ENCODE measurements at regions of chr3 and their contacts with region 1.

Region 1: GRCh38 chr3:194682694-194683310 is 2.9 kb upstream of the FAM43A start:
- DNase-seq: peak; percentile 83
- ATAC-seq: peak; percentile 84
- H3K4me3 ChIP-seq: peak overlapping the region in 1 of 3 experiments; percentile 59; a peak in 3 of 6 replicates
- H3K27ac ChIP-seq: no peak overlapping the region
- H3K4me1 ChIP-seq: peaks cover 50% of the 10 kb centered on the region
- H3K27me3 ChIP-seq: peaks cover 0 to 31% of the 10 kb centered on the region in 2 experiments; a peak in 1 of 5 replicates
- CTCF ChIP-seq: peak; percentile 96
- EP300 ChIP-seq: no peak
- POLR2A ChIP-seq: no peak
- RAD21 ChIP-seq: peak; percentile 93

Region 2: DNA sequence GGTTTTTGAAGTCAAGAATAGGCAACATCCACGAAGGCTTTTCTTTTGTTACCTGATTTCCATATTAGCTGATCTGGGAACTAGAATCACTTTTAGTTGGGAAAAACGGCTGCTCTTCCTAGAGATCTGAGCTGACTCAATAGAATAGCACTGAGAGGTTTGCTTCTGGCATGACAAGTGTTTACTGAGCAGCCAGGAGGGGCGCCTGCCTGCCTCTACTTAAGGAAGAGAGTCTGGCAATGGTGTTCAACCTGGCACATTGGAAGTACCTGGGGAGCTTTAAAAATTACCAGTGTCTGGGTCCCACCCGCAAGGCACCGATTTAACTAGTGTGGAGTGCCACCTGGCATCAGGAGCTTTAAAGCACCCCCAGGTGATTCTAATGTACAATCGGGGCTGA is 37.2 kb after region 1 on chr3:
- CTCF ChIA-PET with region 1: no interaction called
- POLR2A ChIA-PET with region 1: no interaction called
- in situ Hi-C with region 1: no loop called
- intact Hi-C with region 1: loop called (anchors 5 kb)
- DNase-seq: no peak
- ATAC-seq: no peak
- H3K4me3 ChIP-seq: no peak overlapping the region
- H3K27ac ChIP-seq: no peak overlapping the region
- H3K4me1 ChIP-seq: peaks cover 46% of the 10 kb centered on the region
- H3K27me3 ChIP-seq: peaks cover 0 to 6% of the 10 kb centered on the region in 2 experiments; a peak in 1 of 5 replicates
- CTCF ChIP-seq: no peak
- EP300 ChIP-seq: no peak
- POLR2A ChIP-seq: no peak
- RAD21 ChIP-seq: no peak

Region 3: DNA sequence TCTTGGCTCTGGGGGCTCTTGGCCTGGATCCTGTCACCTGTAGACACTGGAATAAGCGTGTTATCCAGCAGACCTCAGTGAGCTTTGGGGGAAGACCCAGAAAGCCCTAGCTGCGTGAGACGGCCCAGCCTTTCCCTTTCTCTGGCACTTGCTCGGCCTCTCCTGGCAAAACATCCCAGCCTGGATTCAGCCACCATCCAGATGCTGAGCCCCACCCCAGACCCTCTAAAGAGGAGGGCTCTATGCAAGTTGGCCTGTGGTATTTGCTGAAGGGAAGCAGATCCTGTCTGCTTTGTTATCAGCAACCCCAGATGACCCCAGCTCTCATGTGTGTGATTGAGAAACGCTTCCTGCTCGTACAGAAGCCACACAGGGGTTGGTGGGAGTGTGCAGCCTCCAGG is 270.0 kb after region 1 on chr3:
- CTCF ChIA-PET with region 1: no interaction called
- POLR2A ChIA-PET with region 1: no interaction called
- in situ Hi-C with region 1: loop called (anchors 10 kb)
- intact Hi-C with region 1: loop called (anchors 5 kb)
- DNase-seq: peak; percentile 59
- ATAC-seq: peak; percentile 80
- H3K4me3 ChIP-seq: no peak overlapping the region
- H3K27ac ChIP-seq: no peak overlapping the region
- H3K4me1 ChIP-seq: peaks cover 21% of the 10 kb centered on the region
- H3K27me3 ChIP-seq: peaks cover 0 to 14% of the 10 kb centered on the region in 2 experiments; a peak in 2 of 5 replicates
- CTCF ChIP-seq: no peak
- EP300 ChIP-seq: no peak
- POLR2A ChIP-seq: no peak
- RAD21 ChIP-seq: no peak

Region 4: GRCh38 chr3:195106418-195106906 is 423.7 kb after region 1 on chr3:
- CTCF ChIA-PET with region 1: interaction called, 13 read pairs
- POLR2A ChIA-PET with region 1: no interaction called
- in situ Hi-C with region 1: loop called (anchors 5 kb)
- intact Hi-C with region 1: no loop called
- DNase-seq: no peak
- ATAC-seq: peak; percentile 80
- H3K4me3 ChIP-seq: peak overlapping the region in 1 of 3 experiments; percentile 19; a peak in 1 of 6 replicates
- H3K27ac ChIP-seq: no peak overlapping the region
- H3K4me1 ChIP-seq: peaks cover 49% of the 10 kb centered on the region
- H3K27me3 ChIP-seq: no peaks in the 10 kb centered on the region
- CTCF ChIP-seq: peak; percentile 98
- EP300 ChIP-seq: no peak
- POLR2A ChIP-seq: no peak
- RAD21 ChIP-seq: peak; percentile 95

Region 5: GRCh38 chr3:195259475-195260279 is 576.9 kb after region 1 on chr3:
- CTCF ChIA-PET with region 1: interaction called, 4 read pairs
- POLR2A ChIA-PET with region 1: interaction called, 9 read pairs
- in situ Hi-C with region 1: no loop called
- intact Hi-C with region 1: loop called (anchors 2 kb)
- DNase-seq: peak; percentile 92
- ATAC-seq: peak; percentile 87
- H3K4me3 ChIP-seq: peak overlapping the region; percentile 56 to 77 (median 56); a peak in 5 of 6 replicates
- H3K27ac ChIP-seq: peak overlapping the region; percentile 92
- H3K4me1 ChIP-seq: peaks cover 38% of the 10 kb centered on the region
- H3K27me3 ChIP-seq: no peaks in the 10 kb centered on the region
- CTCF ChIP-seq: peak; percentile 51; the same call in 1 of the 2 replicates
- EP300 ChIP-seq: peak in 1 of 2 experiments; percentile 67; a peak in 1 of 4 replicates
- POLR2A ChIP-seq: peak in 1 of 2 experiments; percentile 62; a peak in 1 of 4 replicates
- RAD21 ChIP-seq: peak; percentile 99

Measured in HepG2 (cell line).